H1 (cell line): ENCODE measurements at regions of chr22 and their contacts with region 1.

Region 1: DNA sequence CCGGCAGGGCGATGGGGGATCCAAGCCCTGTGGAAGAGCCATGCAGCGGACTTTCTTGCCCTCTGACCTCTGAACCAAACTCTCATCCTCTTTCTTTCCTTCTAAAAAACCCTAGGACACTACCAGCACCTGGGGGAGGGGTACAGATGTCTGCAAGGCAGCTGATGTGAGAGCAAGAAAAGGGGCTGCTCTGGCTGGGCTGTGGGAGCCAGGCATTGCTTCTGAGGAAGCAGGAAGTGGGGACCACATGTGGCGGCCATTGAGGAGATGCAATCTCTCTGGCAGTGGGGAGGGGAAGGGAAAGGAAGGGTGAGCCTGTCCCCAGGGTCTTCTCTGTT is 36.0 kb downstream of the FAM83F start:
- DNase-seq: no peak
- H3K4me3 ChIP-seq: no peak overlapping the region
- H3K27ac ChIP-seq: no peak overlapping the region
- H3K4me1 ChIP-seq: peaks cover 0 to 6% (median 4%) of the 10 kb centered on the region in 4 experiments; a peak in 4 of 7 replicates
- H3K27me3 ChIP-seq: no peaks in the 10 kb centered on the region
- CTCF ChIP-seq: no peak
- EP300 ChIP-seq: no peak
- POLR2A ChIP-seq: no peak
- RAD21 ChIP-seq: no peak

Region 2: GRCh38 chr22:39927544-39927943 is 103.2 kb before region 1 on chr22:
- CTCF ChIA-PET with region 1: interaction called, 119 read pairs
- POLR2A ChIA-PET with region 1: no interaction called
- DNase-seq: peak in 1 of 2 experiments; percentile 53
- H3K4me3 ChIP-seq: no peak overlapping the region
- H3K27ac ChIP-seq: no peak overlapping the region
- H3K4me1 ChIP-seq: peaks cover 0 to 2% (median 0%) of the 10 kb centered on the region in 4 experiments; a peak in 2 of 7 replicates
- H3K27me3 ChIP-seq: peaks cover 0 to 2% (median 0%) of the 10 kb centered on the region in 4 experiments; a peak in 1 of 7 replicates
- CTCF ChIP-seq: peak; percentile 65 to 83 (median 79)
- EP300 ChIP-seq: no peak
- POLR2A ChIP-seq: no peak
- RAD21 ChIP-seq: peak; percentile 63 to 74

Region 3: GRCh38 chr22:40105755-40106154 is 75.0 kb after region 1 on chr22:
- CTCF ChIA-PET with region 1: no interaction called
- POLR2A ChIA-PET with region 1: no interaction called
- DNase-seq: no peak
- H3K4me3 ChIP-seq: no peak overlapping the region
- H3K27ac ChIP-seq: no peak overlapping the region
- H3K4me1 ChIP-seq: peaks cover 0 to 5% (median 1%) of the 10 kb centered on the region in 4 experiments; a peak in 2 of 7 replicates
- H3K27me3 ChIP-seq: no peaks in the 10 kb centered on the region; a peak in 1 of 7 replicates
- CTCF ChIP-seq: no peak
- EP300 ChIP-seq: no peak
- POLR2A ChIP-seq: no peak
- RAD21 ChIP-seq: no peak

Region 4: GRCh38 chr22:40121461-40121860 is 90.7 kb after region 1 on chr22:
- CTCF ChIA-PET with region 1: no interaction called
- POLR2A ChIA-PET with region 1: no interaction called
- DNase-seq: no peak
- H3K4me3 ChIP-seq: no peak overlapping the region
- H3K27ac ChIP-seq: no peak overlapping the region
- H3K4me1 ChIP-seq: peaks cover 0 to 2% (median under 1%) of the 10 kb centered on the region in 4 experiments; a peak in 4 of 7 replicates
- H3K27me3 ChIP-seq: no peaks in the 10 kb centered on the region
- CTCF ChIP-seq: no peak
- EP300 ChIP-seq: no peak
- POLR2A ChIP-seq: no peak
- RAD21 ChIP-seq: no peak